PC-9 (cell line): ENCODE measurements at regions of chr5 and their contacts with region 1.

Region 1: DNA sequence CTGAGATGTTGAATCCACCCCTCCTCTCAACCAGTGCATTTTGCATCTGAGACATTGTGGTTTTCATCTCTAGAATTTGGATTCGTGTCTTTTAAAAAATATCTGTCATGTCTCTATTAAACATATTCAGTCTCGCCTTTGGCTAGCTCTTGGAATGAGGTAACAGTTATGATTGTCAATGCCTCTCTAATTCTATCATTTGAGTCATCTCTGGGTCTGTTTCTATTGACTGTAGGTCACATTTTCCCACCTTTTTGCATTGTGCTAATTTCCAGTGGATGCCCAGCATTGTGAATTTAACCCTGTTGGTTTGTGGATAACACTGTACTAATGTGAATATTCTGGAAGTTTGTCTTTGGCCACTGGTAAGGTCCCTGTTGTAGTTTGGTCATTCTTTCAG is 8.4 kb upstream of the SLC6A3 start:
- DNase-seq: no peak
- H3K4me3 ChIP-seq: no peak overlapping the region
- H3K27ac ChIP-seq: no peak overlapping the region
- H3K4me1 ChIP-seq: no peaks in the 10 kb centered on the region
- H3K27me3 ChIP-seq: peaks cover 62% of the 10 kb centered on the region
- CTCF ChIP-seq: no peak

Region 2: GRCh38 chr5:188488-189481 is 1264.8 kb before region 1 on chr5:
- CTCF ChIA-PET with region 1: no interaction called
- POLR2A ChIA-PET with region 1: no interaction called
- intact Hi-C with region 1: no loop called
- DNase-seq: peak; percentile 76 to 98
- H3K4me3 ChIP-seq: no peak overlapping the region
- H3K27ac ChIP-seq: no peak overlapping the region
- H3K4me1 ChIP-seq: no peaks in the 10 kb centered on the region
- H3K27me3 ChIP-seq: peaks cover 76% of the 10 kb centered on the region
- CTCF ChIP-seq: peak; percentile 100

Region 3: GRCh38 chr5:1511651-1512540 is 58.3 kb after region 1 on chr5:
- CTCF ChIA-PET with region 1: interaction called, 3 read pairs
- POLR2A ChIA-PET with region 1: interaction called, 11 read pairs
- intact Hi-C with region 1: no loop called
- DNase-seq: peak; percentile 75 to 81
- H3K4me3 ChIP-seq: no peak overlapping the region
- H3K27ac ChIP-seq: no peak overlapping the region
- H3K4me1 ChIP-seq: peaks cover 51% of the 10 kb centered on the region
- H3K27me3 ChIP-seq: no peaks in the 10 kb centered on the region
- CTCF ChIP-seq: peak; percentile 66

Region 4: DNA sequence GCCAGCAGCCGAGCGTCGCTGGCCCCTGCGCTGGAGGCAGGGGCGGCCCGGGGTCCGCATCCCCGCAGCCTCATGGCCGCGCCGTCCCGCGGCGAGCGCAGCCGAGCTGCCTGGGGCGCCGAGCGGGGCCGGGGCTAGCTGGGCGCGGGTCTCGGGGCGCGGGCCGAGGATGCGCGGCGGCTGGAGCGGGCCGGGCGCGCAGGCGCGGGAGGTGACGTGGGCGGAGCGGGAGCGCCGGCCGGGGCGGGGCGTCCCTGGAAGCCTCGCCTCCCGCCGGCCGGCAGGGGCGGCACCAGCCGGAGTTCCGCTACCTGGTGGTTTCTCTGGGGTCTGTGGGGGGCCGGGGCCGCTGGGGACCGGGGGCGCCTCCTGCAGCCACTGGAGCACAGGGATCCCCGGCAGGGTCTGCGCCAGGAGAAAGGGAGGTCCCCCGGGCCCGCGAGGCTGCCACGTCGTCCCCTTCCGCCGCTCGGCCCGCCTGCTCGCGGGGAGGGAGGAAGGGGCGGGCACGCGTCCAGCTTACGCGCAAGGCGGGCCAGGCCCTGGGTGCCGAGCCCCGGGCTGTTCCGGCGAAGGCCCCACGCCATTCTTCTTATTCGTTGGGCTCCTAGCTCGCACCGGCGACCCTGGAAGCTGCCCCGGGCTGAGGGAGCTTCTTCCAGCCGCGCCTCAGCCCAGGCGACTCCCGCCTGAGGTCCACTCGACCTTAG is 70.3 kb after region 1 on chr5 and contains the start of gene LPCAT1:
- CTCF ChIA-PET with region 1: no interaction called
- POLR2A ChIA-PET with region 1: no interaction called
- intact Hi-C with region 1: no loop called
- DNase-seq: peak; percentile 52 to 94
- H3K4me3 ChIP-seq: peak within 1 kb of the TSS; percentile 52
- H3K27ac ChIP-seq: no peak within 1 kb of the TSS
- H3K4me1 ChIP-seq: peaks cover 18% of the 10 kb centered on the region
- H3K27me3 ChIP-seq: no peaks in the 10 kb centered on the region
- CTCF ChIP-seq: 0 out of 2 replicates have a peak, but pooled peaks have one; percentile 28
- total RNA-seq, gene LPCAT1: 90.6 and 96.1 TPM in 2 replicates